ENCODE measurements at regions of chr2 and their contacts with region 1.

Region 1: GRCh38 chr2:207473049-207473930 is 56.5 kb upstream of the CREB1 start:
- DNase-seq: no peak
- H3K4me3 ChIP-seq: peak overlapping the region; percentile 16 to 35 (median 28)
- H3K27ac ChIP-seq: peak overlapping the region; percentile 35 to 70 (median 62)
- H3K4me1 ChIP-seq: peaks cover 16 to 35% (median 28%) of the 10 kb centered on the region in 4 donors
- H3K27me3 ChIP-seq: no peaks in the 10 kb centered on the region
- CTCF ChIP-seq: peak; percentile 65 to 76 (median 72)
- EP300 ChIP-seq: no peak
- POLR2A ChIP-seq: no peak

Region 2: GRCh38 chr2:206693399-206694137 is 779.7 kb before region 1 on chr2:
- intact Hi-C with region 1: loop called (anchors 2 kb)
- DNase-seq: no peak
- H3K4me3 ChIP-seq: no peak overlapping the region
- H3K27ac ChIP-seq: no peak overlapping the region
- H3K4me1 ChIP-seq: no peaks in the 10 kb centered on the region
- H3K27me3 ChIP-seq: no peaks in the 10 kb centered on the region
- CTCF ChIP-seq: peak; percentile 58 to 63 (median 61)
- EP300 ChIP-seq: no peak
- POLR2A ChIP-seq: no peak

Region 3: DNA sequence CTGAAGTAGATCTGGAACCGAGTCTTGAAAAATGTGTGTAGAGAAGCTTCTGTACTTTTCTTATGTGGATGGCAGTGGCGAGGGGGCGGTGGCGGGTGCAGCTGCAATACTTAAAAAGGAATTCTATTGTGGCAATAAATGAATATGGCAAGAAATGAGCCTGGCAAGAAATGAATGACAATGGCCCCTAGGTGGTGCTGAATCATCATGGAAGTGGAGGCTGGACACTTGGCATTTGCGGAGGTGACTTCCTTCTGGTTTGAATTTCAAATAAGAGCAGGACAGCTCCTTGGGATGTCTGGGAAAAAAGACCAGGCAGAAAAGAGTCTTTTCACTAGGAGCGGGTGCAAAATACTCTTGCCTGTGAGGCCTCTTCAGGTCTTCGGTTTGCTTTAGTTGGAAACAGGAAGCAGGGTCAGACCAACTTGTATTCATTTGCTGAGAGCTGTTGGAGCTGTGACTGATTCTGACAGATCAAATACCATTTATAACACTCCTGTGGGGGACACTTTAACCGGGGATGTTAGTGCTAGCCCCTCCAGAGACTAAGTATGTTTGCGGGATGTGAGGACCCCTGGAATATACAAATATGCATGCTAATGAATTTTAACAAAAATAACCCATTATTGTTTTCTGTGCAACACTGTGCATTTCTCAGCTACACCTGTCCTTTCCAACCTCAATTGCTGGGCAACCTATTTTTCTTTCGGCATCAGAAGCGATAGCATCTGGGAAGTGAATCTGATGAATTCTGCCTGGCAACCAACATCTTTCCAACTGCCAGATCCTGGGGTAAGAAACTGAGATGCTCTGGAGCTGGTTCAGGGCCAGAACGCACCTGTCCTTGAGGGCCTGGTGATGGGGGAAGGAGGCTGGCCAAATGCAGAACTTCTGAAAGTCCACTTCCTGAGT is 672.5 kb before region 1 on chr2:
- intact Hi-C with region 1: loop called (anchors 2 kb)
- DNase-seq: no peak
- H3K4me3 ChIP-seq: no peak overlapping the region
- H3K27ac ChIP-seq: peak overlapping the region in 2 of 4 donors; percentile 37 to 38
- H3K4me1 ChIP-seq: peaks cover 7 to 19% (median 14%) of the 10 kb centered on the region in 4 donors
- H3K27me3 ChIP-seq: no peaks in the 10 kb centered on the region
- CTCF ChIP-seq: peak; percentile 70 to 78 (median 75)
- EP300 ChIP-seq: no peak
- POLR2A ChIP-seq: no peak

Region 4: GRCh38 chr2:206981739-206982340 is 491.4 kb before region 1 on chr2:
- intact Hi-C with region 1: loop called (anchors 1 kb)
- DNase-seq: peak; percentile 92
- H3K4me3 ChIP-seq: peak overlapping the region in 1 of 4 donors; percentile 18
- H3K27ac ChIP-seq: no peak overlapping the region
- H3K4me1 ChIP-seq: peaks cover 23 to 36% (median 29%) of the 10 kb centered on the region in 4 donors
- H3K27me3 ChIP-seq: no peaks in the 10 kb centered on the region
- CTCF ChIP-seq: peak; percentile 81 to 87 (median 85)
- EP300 ChIP-seq: no peak
- POLR2A ChIP-seq: no peak

Region 5: DNA sequence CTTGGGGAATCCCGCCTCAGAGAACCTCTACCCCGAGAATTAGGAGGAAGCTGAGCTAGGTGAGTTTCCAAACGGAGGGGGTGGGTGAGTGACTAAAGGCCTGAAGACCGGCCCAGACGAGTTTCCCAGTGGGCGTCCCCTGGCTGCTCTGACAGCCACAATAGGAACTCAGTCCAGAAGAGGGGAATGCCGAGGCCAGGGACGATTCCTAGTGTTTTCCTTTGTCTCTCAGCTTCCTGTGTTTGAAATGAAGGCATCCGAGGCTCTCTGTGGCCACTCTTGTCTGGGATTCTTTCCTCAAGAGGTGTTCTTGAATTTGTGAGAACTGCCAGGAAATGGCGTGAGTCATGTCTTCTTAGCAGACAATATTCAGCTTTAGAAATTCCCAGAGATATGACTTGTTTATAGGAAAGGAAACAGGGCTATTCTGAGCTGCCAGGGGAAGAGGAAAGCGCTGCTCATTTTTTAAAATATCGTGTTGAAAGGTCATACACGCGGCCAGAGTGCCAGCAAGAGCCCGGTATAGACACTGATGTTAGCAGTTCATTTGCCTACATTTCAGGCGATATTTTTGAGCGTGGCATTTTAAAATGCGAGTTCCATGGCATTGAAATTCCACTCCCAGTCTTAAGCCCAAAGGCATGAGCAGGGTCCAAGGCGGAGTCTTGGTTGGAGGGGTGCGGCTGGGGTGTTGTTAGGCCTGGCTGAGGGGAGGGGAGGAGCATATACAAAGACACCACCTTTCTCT is 138.5 kb before region 1 on chr2:
- intact Hi-C with region 1: loop called (anchors 10 kb)
- DNase-seq: no peak
- H3K4me3 ChIP-seq: peak overlapping the region; percentile 22 to 47 (median 38)
- H3K27ac ChIP-seq: peak overlapping the region; percentile 77 to 87 (median 82)
- H3K4me1 ChIP-seq: peaks cover 20 to 34% (median 25%) of the 10 kb centered on the region in 4 donors
- H3K27me3 ChIP-seq: no peaks in the 10 kb centered on the region
- CTCF ChIP-seq: no peak
- EP300 ChIP-seq: peak; percentile 85
- POLR2A ChIP-seq: no peak

Region 6: DNA sequence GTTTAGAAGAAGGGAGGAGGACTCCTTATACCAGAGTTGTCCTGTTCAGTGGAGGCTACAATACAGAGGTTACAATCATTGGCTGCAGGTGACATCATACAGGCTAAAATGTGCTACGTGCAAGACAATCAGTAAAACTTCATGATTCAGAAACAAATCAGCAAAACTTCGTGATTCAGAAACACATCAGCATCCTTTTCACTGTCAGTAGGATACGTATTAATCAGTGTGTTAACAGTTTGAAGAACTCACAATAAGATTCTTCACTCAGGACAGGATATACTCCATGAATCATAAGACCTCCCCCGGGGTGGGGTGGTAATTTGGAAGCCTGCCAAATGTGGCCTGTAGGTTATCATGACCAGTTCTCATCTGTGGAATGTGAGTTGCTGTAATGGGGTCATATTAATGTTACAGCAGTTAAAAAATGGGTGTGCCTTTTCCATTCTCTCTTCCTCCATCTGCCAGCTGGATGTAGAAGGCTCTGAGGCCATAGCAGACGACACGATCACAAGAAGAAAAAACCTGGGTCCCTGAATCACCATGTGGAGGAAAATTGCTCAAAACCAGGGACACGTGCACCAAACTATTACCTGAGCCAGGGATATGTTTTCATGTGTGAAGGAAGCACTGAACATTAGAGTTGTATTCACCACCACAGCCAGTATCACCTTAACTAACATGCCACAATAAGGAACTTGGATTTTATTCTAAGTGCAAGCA is 78.3 kb before region 1 on chr2:
- intact Hi-C with region 1: no loop called
- DNase-seq: no peak
- H3K4me3 ChIP-seq: no peak overlapping the region
- H3K27ac ChIP-seq: no peak overlapping the region
- H3K4me1 ChIP-seq: no peaks in the 10 kb centered on the region
- H3K27me3 ChIP-seq: no peaks in the 10 kb centered on the region
- CTCF ChIP-seq: no peak
- EP300 ChIP-seq: no peak
- POLR2A ChIP-seq: no peak

Measured in esophagus muscularis mucosa (tissue), 4 donors.